CD14-positive monocyte (primary cell): ENCODE measurements at regions of chr17 and their contacts with region 1.

Region 1: DNA sequence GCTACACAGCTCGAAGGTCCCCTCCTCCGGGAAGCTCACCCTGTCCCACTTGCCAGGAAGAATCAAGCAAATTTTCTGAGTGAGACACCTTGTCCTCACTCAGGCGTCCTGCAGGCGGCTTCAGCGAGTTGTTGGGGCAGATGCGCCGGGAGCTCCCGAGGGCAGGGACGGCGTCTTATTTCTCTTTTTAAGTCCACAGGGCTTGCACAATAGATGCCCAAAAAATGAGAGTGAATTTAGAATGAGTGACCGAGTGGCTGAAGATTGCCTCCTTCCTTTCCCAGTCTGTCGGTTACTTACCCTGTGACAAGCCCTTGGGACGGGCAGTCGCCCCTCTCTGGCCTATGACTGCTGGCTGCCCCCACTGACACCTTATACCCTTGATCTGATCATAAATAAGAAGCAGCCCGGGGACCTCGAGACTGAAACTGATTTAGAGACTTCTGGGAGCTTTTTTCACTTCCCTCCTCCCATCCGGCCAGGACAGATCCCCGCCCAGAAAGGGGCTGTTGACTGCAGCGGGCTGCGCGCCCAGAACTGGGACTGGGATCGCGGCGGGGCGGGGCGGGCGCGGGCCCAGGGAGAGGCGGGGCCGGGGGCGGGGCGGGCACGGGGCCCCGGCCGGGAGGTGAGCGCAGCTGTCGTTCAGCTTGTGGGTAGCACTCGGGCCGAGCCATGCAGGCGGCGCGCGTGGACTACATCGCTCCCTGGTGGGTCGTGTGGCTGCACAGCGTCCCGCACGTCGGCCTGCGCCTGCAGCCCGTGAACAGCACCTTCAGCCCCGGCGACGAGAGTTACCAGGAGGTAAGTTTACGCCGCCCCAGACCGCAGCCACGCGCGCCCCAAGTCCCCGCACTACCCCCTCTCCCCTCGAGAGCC is at the start of gene TTYH2:
- DNase-seq: peak; percentile 81
- H3K4me3 ChIP-seq: peak within 1 kb of the TSS; percentile 56 to 96 (median 71)
- H3K4me3 Mint-ChIP-seq: peak within 1 kb of the TSS; percentile 99
- H3K27ac ChIP-seq: peak within 1 kb of the TSS; percentile 84 to 85
- H3K27ac Mint-ChIP-seq: peak within 1 kb of the TSS; percentile 93 to 99 (median 97)
- H3K4me1 ChIP-seq: peaks cover 48 to 71% of the 10 kb centered on the region in 2 donors
- H3K4me1 Mint-ChIP-seq: peaks cover 68% of the 10 kb centered on the region
- H3K27me3 ChIP-seq: no peaks in the 10 kb centered on the region
- H3K27me3 Mint-ChIP-seq: no peaks in the 10 kb centered on the region
- CTCF ChIP-seq: peak; percentile 46
- polyA plus RNA-seq, gene TTYH2: 12.3 to 57.4 (median 18.7) TPM

Region 2: DNA sequence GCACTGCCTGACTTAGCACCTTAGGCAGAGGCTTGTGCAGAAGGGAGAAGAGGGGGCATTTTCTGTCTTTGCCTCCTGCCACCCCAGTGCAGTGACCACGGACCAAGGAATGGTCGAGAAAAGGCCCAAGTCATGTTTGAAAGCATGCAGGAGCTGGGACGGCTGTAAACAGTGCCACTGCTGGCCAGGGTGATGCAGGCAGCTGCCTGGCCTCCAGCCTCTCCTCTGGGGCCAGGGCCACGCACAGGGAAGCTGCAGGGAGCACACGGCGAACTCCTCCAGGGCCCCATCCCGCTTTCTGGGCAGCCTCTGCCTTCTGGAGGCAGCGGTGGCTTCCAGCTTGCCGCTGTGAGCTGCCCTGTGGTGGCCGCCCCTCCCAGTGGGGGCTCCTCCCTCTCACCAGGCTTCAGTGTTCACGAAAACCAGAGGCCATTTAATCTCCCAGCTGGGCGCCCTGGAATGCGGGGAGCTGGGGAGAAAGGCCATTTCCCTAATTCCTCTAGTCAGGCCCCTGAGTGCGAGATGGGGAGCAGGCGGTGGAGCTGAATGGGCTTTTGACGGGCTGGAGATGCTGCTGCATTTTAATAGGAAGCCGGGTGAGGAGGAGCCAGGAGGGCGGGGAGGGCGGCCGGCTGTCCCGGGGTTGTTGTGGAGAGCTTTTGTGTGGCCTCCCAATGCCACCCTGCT is 32.1 kb after region 1 on chr17:
- intact Hi-C with region 1: loop called in 1 of 2 experiments (anchors 5 kb)
- DNase-seq: no peak
- H3K4me3 ChIP-seq: no peak overlapping the region
- H3K4me3 Mint-ChIP-seq: no peak overlapping the region
- H3K27ac ChIP-seq: no peak overlapping the region
- H3K27ac Mint-ChIP-seq: peak overlapping the region in 2 of 7 donors; percentile 28 to 73
- H3K4me1 ChIP-seq: peaks cover 15 to 24% of the 10 kb centered on the region in 2 donors
- H3K4me1 Mint-ChIP-seq: peaks cover 28% of the 10 kb centered on the region
- H3K27me3 ChIP-seq: no peaks in the 10 kb centered on the region
- H3K27me3 Mint-ChIP-seq: no peaks in the 10 kb centered on the region
- CTCF ChIP-seq: no peak

Region 3: DNA sequence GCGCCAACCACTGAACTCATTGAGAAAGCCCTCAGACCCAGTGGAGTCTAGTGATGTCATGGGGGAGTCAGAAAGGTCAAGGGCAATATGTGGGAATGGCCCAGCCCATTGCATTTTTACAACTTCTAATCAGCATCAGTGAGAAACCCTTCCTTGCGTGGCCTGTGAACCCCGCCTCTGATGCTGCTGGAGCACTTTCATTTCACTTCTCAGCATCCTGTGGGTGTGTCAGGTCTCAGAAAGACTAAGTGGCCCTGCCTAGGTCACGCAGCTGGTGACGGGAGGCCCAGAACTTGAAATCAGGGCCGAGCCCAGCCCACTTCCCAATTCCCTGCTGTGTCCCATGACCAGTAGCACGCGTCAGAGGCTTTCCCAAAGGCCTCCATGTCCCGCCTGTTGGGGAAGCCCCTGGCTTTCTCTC is 67.0 kb after region 1 on chr17:
- intact Hi-C with region 1: loop called (anchors 5 kb)
- DNase-seq: peak; percentile 60 to 87 (median 63)
- H3K4me3 ChIP-seq: no peak overlapping the region
- H3K4me3 Mint-ChIP-seq: peak overlapping the region in 1 of 2 donors; percentile 39
- H3K27ac ChIP-seq: no peak overlapping the region
- H3K27ac Mint-ChIP-seq: peak overlapping the region in 6 of 7 donors; percentile 9 to 84 (median 72)
- H3K4me1 ChIP-seq: peaks cover 25 to 26% of the 10 kb centered on the region in 2 donors
- H3K4me1 Mint-ChIP-seq: peaks cover 31% of the 10 kb centered on the region
- H3K27me3 ChIP-seq: peaks cover 0 to 5% of the 10 kb centered on the region in 2 donors
- H3K27me3 Mint-ChIP-seq: peaks cover 15 to 24% (median 17%) of the 10 kb centered on the region in 3 donors
- CTCF ChIP-seq: no peak

Region 4: GRCh38 chr17:74296548-74296936 is 83.4 kb after region 1 on chr17:
- intact Hi-C with region 1: loop called (anchors 5 kb)
- DNase-seq: peak; percentile 31 to 47 (median 38)
- H3K4me3 ChIP-seq: no peak overlapping the region
- H3K4me3 Mint-ChIP-seq: no peak overlapping the region
- H3K27ac ChIP-seq: no peak overlapping the region
- H3K27ac Mint-ChIP-seq: peak overlapping the region in 1 of 7 donors; percentile 1
- H3K4me1 ChIP-seq: no peaks in the 10 kb centered on the region
- H3K4me1 Mint-ChIP-seq: peaks cover 3% of the 10 kb centered on the region
- H3K27me3 ChIP-seq: no peaks in the 10 kb centered on the region
- H3K27me3 Mint-ChIP-seq: peaks cover 1 to 19% (median 8%) of the 10 kb centered on the region in 3 donors
- CTCF ChIP-seq: peak; percentile 61

Region 5: DNA sequence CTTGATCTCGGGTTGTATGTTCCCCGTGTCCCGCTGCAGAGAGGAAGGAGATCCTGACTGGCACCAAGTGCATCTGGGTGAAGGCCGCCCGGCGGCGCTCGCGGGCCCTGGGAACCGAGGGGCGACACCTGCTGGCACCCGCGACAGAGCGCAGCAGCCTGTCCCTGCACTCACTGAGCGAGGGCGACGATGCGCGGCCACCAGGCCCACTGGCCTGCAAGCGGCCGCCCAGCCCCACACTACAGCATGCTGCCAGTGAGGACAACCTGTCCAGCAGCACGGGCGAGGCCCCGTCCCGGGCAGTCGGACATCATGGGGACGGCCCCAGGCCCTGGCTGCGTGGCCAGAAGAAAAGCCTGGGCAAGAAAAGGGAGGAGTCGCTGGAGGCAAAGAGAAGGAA is 141.0 kb after region 1 on chr17:
- intact Hi-C with region 1: loop called in 1 of 2 experiments (anchors 5 kb)
- DNase-seq: peak; percentile 48 to 62 (median 49)
- H3K4me3 ChIP-seq: no peak overlapping the region
- H3K4me3 Mint-ChIP-seq: peak overlapping the region in 1 of 2 donors; percentile 69
- H3K27ac ChIP-seq: no peak overlapping the region
- H3K27ac Mint-ChIP-seq: no peak overlapping the region
- H3K4me1 ChIP-seq: peaks cover 0 to 18% of the 10 kb centered on the region in 2 donors
- H3K4me1 Mint-ChIP-seq: peaks cover 11% of the 10 kb centered on the region
- H3K27me3 ChIP-seq: peaks cover 37 to 79% of the 10 kb centered on the region in 2 donors
- H3K27me3 Mint-ChIP-seq: peaks cover 74 to 92% (median 83%) of the 10 kb centered on the region in 3 donors
- CTCF ChIP-seq: peak; percentile 82

Region 6: DNA sequence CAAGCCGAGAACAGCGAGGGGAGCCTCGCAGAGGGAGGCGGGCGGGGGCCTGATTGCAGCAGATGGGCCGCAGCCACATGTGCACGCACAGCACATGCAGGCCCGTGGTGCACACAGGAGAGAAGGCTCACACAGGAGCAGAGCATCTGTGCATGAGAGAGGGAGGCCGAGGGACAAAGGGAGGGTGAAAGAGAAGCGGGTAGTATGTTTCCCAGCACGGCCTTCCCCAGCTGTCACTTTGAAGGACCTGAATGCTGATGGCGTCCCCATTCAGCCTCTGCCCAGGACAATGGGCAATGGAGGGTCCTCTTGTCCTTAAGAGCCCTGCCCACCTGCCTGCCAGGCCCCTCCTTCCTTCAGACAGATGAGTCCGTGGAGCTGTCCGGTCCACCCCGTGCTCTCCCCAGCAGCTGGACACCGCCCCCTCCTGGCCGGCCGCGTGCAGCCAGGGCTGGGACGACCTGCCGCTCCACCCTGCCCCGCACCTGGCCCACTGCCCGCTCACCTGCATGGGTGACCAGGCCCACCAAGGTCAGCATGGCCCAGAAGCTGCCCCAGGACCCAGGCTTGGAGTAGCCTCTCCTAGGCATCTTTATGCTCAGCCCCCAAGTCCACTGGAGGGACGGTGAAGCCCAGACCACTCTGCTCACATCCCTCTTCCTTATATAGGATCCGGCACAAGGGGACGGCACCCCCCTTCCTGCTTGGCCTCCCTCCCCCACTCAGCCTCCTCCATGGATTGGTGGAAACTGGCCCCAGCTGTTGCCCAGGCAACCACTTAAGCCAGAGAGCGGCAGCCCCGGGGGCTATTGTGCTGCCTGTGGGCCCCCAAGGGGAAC is 148.3 kb after region 1 on chr17 and contains the start of gene BTBD17:
- intact Hi-C with region 1: loop called in 1 of 2 experiments (anchors 2 kb)
- DNase-seq: peak; percentile 16 to 34 (median 28)
- H3K4me3 ChIP-seq: no peak within 1 kb of the TSS
- H3K4me3 Mint-ChIP-seq: peak within 1 kb of the TSS in 1 of 2 donors; percentile 21
- H3K27ac ChIP-seq: no peak within 1 kb of the TSS
- H3K27ac Mint-ChIP-seq: peak within 1 kb of the TSS in 1 of 7 donors; percentile 33
- H3K4me1 ChIP-seq: peaks cover 0 to 12% of the 10 kb centered on the region in 2 donors
- H3K4me1 Mint-ChIP-seq: peaks cover 5% of the 10 kb centered on the region
- H3K27me3 ChIP-seq: peaks cover 14 to 43% of the 10 kb centered on the region in 2 donors
- H3K27me3 Mint-ChIP-seq: peaks cover 27 to 62% (median 44%) of the 10 kb centered on the region in 3 donors
- CTCF ChIP-seq: peak; percentile 86
- polyA plus RNA-seq, gene BTBD17: not detected